ENCODE measurements at regions of chr1 and their contacts with region 1.

Region 1: DNA sequence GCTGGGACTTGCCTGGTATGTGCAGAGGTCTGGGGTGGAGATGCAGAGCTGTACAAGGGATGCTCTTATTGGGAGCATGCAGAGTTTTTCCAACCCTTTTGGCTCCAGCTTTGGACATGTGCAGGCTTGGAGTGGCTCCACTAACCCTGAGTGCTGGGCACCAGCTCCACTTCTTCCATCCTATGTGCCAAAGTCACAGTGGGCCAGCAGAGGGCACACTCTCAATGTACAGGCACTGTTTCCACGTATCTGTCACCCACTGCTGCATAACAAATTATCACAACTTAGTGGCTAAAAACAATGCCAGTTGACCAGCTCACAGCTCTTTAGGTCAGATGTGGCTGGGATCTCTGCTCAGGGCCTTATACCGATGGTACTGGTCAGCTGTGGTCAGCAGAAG is 631.8 kb downstream of the AJAP1 start:
- DNase-seq: peak; percentile 11 to 41 (median 27)
- H3K4me3 ChIP-seq: no peak overlapping the region
- H3K4me3 Mint-ChIP-seq: no peak overlapping the region
- H3K27ac ChIP-seq: no peak overlapping the region
- H3K27ac Mint-ChIP-seq: peak overlapping the region in 3 of 7 donors; percentile 4 to 63 (median 14)
- H3K4me1 ChIP-seq: no peaks in the 10 kb centered on the region
- H3K4me1 Mint-ChIP-seq: peaks cover 0 to 12% (median 4%) of the 10 kb centered on the region in 4 donors
- H3K27me3 ChIP-seq: no peaks in the 10 kb centered on the region
- H3K27me3 Mint-ChIP-seq: no peaks in the 10 kb centered on the region

Region 2: DNA sequence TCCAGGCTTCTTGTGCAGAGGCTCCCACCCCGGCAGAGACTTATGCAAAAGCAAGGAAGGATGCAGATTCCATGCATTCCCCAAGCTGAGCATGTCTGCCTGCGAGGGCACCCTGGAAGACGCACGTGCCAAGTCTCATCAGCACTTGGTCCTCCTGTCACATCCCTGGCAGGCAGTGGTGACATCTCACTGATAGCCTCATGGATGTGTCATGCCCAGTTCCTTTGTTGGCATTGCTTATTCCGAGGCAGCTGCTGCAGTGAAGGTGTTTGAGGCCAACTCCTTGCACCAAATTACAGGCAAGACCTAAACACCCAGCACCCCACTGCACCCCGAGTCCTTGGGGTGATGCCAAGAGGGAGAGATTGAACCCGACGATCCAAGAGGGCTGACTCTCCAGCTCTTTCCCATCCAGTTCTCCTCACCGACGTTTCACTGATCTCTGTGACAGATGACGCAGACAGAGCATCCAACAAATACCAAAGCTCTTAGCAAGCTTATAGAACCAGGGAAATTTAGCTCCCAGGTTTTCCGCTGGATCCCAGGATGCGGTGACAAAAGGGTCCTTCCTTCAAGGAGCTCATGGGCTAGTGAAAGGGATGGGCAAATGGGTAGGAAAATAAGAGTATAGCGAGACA is 20.7 kb before region 1 on chr1:
- CTCF ChIA-PET with region 1: no interaction called
- POLR2A ChIA-PET with region 1: no interaction called
- intact Hi-C with region 1: no loop called
- DNase-seq: no peak
- H3K4me3 ChIP-seq: no peak overlapping the region
- H3K4me3 Mint-ChIP-seq: no peak overlapping the region
- H3K27ac ChIP-seq: no peak overlapping the region
- H3K27ac Mint-ChIP-seq: no peak overlapping the region
- H3K4me1 ChIP-seq: no peaks in the 10 kb centered on the region
- H3K4me1 Mint-ChIP-seq: peaks cover 0 to 2% (median 0%) of the 10 kb centered on the region in 4 donors
- H3K27me3 ChIP-seq: no peaks in the 10 kb centered on the region
- H3K27me3 Mint-ChIP-seq: peaks cover 4 to 6% of the 10 kb centered on the region in 2 donors

Region 3: GRCh38 chr1:5338466-5338865 is 52.2 kb after region 1 on chr1:
- CTCF ChIA-PET with region 1: no interaction called
- POLR2A ChIA-PET with region 1: no interaction called
- intact Hi-C with region 1: no loop called
- DNase-seq: no peak
- H3K4me3 ChIP-seq: no peak overlapping the region
- H3K4me3 Mint-ChIP-seq: no peak overlapping the region
- H3K27ac ChIP-seq: no peak overlapping the region
- H3K27ac Mint-ChIP-seq: peak overlapping the region in 2 of 7 donors; percentile 24 to 48
- H3K4me1 ChIP-seq: peaks cover 11% of the 10 kb centered on the region
- H3K4me1 Mint-ChIP-seq: peaks cover 12 to 30% (median 22%) of the 10 kb centered on the region in 4 donors
- H3K27me3 ChIP-seq: no peaks in the 10 kb centered on the region
- H3K27me3 Mint-ChIP-seq: peaks cover 0 to 2% of the 10 kb centered on the region in 2 donors

Region 4: DNA sequence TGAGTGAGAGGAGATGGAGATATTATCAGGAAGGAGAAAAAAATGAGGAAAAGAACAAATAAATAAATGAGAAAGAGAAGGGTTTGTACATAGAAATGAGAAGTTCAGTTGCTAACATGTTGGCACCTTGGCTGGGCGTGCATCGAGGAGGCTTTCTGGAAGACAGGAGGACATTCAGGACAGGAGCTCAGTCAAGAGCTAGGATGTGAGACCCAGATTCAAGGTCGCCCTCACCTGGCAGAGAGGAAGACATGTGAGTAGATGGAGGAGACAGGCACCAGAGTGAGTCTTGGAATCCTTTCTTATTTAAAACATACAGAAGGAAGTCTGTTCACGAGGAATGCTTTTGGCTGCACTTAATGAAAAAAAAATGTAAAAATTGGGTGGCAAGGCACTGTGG is 65.1 kb after region 1 on chr1:
- CTCF ChIA-PET with region 1: interaction called, 11 read pairs
- POLR2A ChIA-PET with region 1: interaction called, 3 read pairs
- intact Hi-C with region 1: loop called (anchors 2 kb)
- DNase-seq: no peak
- H3K4me3 ChIP-seq: no peak overlapping the region
- H3K4me3 Mint-ChIP-seq: no peak overlapping the region
- H3K27ac ChIP-seq: no peak overlapping the region
- H3K27ac Mint-ChIP-seq: no peak overlapping the region
- H3K4me1 ChIP-seq: peaks cover 12% of the 10 kb centered on the region
- H3K4me1 Mint-ChIP-seq: peaks cover 7 to 21% (median 14%) of the 10 kb centered on the region in 4 donors
- H3K27me3 ChIP-seq: no peaks in the 10 kb centered on the region
- H3K27me3 Mint-ChIP-seq: peaks cover 1 to 3% of the 10 kb centered on the region in 2 donors

Region 5: DNA sequence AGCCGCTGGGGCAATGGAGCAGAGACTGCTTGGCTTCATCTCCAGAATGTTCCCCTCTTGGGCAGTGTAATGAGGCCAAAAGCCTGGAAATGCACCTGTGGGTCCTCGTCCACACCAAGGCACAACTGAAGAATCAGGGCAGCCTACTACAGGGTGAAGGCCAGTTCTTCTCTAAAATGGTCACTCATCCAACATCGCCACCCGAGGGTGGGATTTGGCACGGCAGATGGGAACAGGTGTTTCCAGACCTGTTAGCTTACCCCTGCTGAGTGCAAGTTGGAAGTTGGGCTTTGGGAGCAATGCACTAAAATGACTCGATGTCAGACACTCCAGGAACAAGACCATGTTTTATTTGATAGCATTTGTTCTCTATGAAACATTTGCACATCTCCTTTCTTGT is 162.2 kb after region 1 on chr1:
- CTCF ChIA-PET with region 1: interaction called, 13 read pairs
- POLR2A ChIA-PET with region 1: interaction called, 3 read pairs
- intact Hi-C with region 1: no loop called
- DNase-seq: peak in 4 of 5 donors; percentile 11 to 28 (median 14)
- H3K4me3 ChIP-seq: no peak overlapping the region
- H3K4me3 Mint-ChIP-seq: no peak overlapping the region
- H3K27ac ChIP-seq: no peak overlapping the region
- H3K27ac Mint-ChIP-seq: no peak overlapping the region
- H3K4me1 ChIP-seq: no peaks in the 10 kb centered on the region
- H3K4me1 Mint-ChIP-seq: peaks cover 0 to 3% (median 0%) of the 10 kb centered on the region in 4 donors
- H3K27me3 ChIP-seq: no peaks in the 10 kb centered on the region
- H3K27me3 Mint-ChIP-seq: peaks cover 3 to 4% of the 10 kb centered on the region in 2 donors

Measured in CD4-positive, alpha-beta memory T cell (primary cell).